Calu3 (cell line): ENCODE measurements at regions of chr6 and their contacts with region 1.

Region 1: DNA sequence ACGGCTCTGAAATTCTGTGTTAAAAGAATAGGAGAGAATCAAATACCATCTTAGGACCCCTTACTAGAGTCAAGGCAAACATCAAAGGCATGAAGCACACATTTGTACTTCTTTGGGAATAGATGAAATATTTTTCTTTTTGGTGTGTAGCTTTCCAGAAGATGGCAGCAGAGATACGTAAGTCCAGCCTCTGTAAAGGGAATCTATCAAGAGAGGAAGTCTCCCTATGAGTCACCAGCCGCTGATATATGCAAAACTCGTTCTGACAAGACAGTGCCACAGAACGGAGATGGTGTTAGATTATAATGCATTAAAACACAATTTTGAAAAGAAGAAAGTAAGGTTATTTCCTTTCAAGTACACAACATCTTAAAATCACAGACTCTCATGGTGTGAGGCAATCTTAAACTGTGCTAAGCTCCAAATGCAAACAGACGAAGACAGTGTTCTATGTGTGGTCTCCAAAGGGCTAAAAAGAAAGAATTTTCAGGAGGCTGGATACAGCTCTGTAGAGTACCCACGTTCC is 120.0 kb upstream of the AGPAT4 start:
- DNase-seq: peak; percentile 55
- H3K4me3 Mint-ChIP-seq: no peak overlapping the region
- H3K27ac Mint-ChIP-seq: no peak overlapping the region
- H3K4me1 Mint-ChIP-seq: no peaks in the 10 kb centered on the region
- H3K27me3 Mint-ChIP-seq: peaks cover 12% of the 10 kb centered on the region
- CTCF ChIP-seq: peak; percentile 62

Region 2: GRCh38 chr6:161536224-161536630 is 142.3 kb after region 1 on chr6:
- CTCF ChIA-PET with region 1: no interaction called
- intact Hi-C with region 1: no loop called
- DNase-seq: no peak
- H3K4me3 Mint-ChIP-seq: no peak overlapping the region
- H3K27ac Mint-ChIP-seq: no peak overlapping the region
- H3K4me1 Mint-ChIP-seq: no peaks in the 10 kb centered on the region
- H3K27me3 Mint-ChIP-seq: no peaks in the 10 kb centered on the region
- CTCF ChIP-seq: no peak

Region 3: GRCh38 chr6:161829291-161829729 is 435.4 kb after region 1 on chr6:
- CTCF ChIA-PET with region 1: no interaction called
- intact Hi-C with region 1: loop called (anchors 10 kb)
- DNase-seq: no peak
- H3K4me3 Mint-ChIP-seq: no peak overlapping the region
- H3K27ac Mint-ChIP-seq: no peak overlapping the region
- H3K4me1 Mint-ChIP-seq: no peaks in the 10 kb centered on the region
- H3K27me3 Mint-ChIP-seq: no peaks in the 10 kb centered on the region
- CTCF ChIP-seq: no peak